Psoas muscle (tissue), 8 donors: ENCODE measurements at regions of chr1 and their contacts with region 1.

Region 1: GRCh38 chr1:186363891-186364290 is 11.2 kb downstream of the TPR start:
- DNase-seq: no peak
- ATAC-seq: no peak
- H3K4me3 ChIP-seq: no peak overlapping the region
- H3K27ac ChIP-seq: no peak overlapping the region
- H3K4me1 ChIP-seq: no peaks in the 10 kb centered on the region
- H3K27me3 ChIP-seq: no peaks in the 10 kb centered on the region
- CTCF ChIP-seq: no peak

Region 2: GRCh38 chr1:185144233-185144632 is 1219.7 kb before region 1 on chr1:
- intact Hi-C with region 1: loop called in 1 of 2 experiments (anchors 10 kb)
- DNase-seq: no peak
- ATAC-seq: no peak
- H3K4me3 ChIP-seq: no peak overlapping the region
- H3K27ac ChIP-seq: no peak overlapping the region
- H3K4me1 ChIP-seq: no peaks in the 10 kb centered on the region
- H3K27me3 ChIP-seq: no peaks in the 10 kb centered on the region
- CTCF ChIP-seq: no peak

Region 3: GRCh38 chr1:186315570-186315969 is 48.3 kb before region 1 on chr1:
- intact Hi-C with region 1: loop called (anchors 5 to 10 kb)
- DNase-seq: no peak
- ATAC-seq: no peak
- H3K4me3 ChIP-seq: no peak overlapping the region
- H3K27ac ChIP-seq: no peak overlapping the region
- H3K4me1 ChIP-seq: no peaks in the 10 kb centered on the region
- H3K27me3 ChIP-seq: no peaks in the 10 kb centered on the region
- CTCF ChIP-seq: no peak

Region 4: GRCh38 chr1:186325239-186325638 is 38.7 kb before region 1 on chr1:
- intact Hi-C with region 1: loop called (anchors 5 kb)
- DNase-seq: no peak
- ATAC-seq: no peak
- H3K4me3 ChIP-seq: no peak overlapping the region
- H3K27ac ChIP-seq: no peak overlapping the region
- H3K4me1 ChIP-seq: no peaks in the 10 kb centered on the region
- H3K27me3 ChIP-seq: no peaks in the 10 kb centered on the region
- CTCF ChIP-seq: no peak

Region 5: DNA sequence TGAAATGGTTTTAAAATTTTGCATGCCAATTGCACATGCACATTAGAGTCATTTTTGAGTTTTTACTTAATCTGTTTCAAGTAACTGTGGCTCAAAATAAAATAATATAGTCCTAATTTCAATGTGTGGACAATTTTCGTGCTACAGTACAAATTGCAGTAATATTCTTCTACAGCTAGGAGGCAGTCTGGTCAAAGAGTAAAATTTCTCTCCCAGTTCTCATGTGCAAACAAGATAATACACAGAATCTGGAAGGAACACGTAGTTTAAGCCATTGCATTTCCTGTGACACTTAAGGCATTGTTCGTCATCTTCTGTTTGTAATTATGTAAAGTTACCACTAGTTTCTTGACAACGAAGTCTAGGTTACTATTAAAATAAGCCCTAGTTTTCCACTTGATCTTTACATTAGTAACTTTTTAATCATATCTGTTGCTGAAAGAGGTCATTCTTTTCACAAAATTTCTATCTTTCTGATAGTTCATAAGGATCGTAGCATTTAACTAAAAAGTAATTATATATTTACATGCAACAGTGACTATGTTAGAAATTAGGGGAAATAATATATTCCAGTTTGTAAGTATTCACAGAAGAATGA is 40.7 kb after region 1 on chr1:
- intact Hi-C with region 1: loop called in 1 of 2 experiments (anchors 5 kb)
- DNase-seq: no peak
- ATAC-seq: peak in 1 of 4 donors; percentile 41
- H3K4me3 ChIP-seq: no peak overlapping the region
- H3K27ac ChIP-seq: no peak overlapping the region
- H3K4me1 ChIP-seq: no peaks in the 10 kb centered on the region
- H3K27me3 ChIP-seq: no peaks in the 10 kb centered on the region
- CTCF ChIP-seq: peak; percentile 56